ENCODE measurements at regions of chr11 and their contacts with region 1.

Region 1: GRCh38 chr11:9972989-9973388 is 309.1 kb downstream of the SWAP70 start:
- DNase-seq: peak; percentile 9
- H3K4me3 Mint-ChIP-seq: no peak overlapping the region
- H3K27ac Mint-ChIP-seq: no peak overlapping the region
- H3K4me1 Mint-ChIP-seq: no peaks in the 10 kb centered on the region
- H3K27me3 Mint-ChIP-seq: peaks cover 5% of the 10 kb centered on the region

Region 2: GRCh38 chr11:9534791-9535781 is 437.9 kb before region 1 on chr11:
- intact Hi-C with region 1: loop called (anchors 1 kb)
- DNase-seq: peak; percentile 59
- H3K4me3 Mint-ChIP-seq: no peak overlapping the region
- H3K27ac Mint-ChIP-seq: no peak overlapping the region
- H3K4me1 Mint-ChIP-seq: no peaks in the 10 kb centered on the region
- H3K27me3 Mint-ChIP-seq: no peaks in the 10 kb centered on the region

Region 3: GRCh38 chr11:9663699-9664275 is 309.2 kb before region 1 on chr11 and contains the start of gene SWAP70:
- intact Hi-C with region 1: loop called (anchors 10 kb)
- DNase-seq: peak; percentile 79
- H3K4me3 Mint-ChIP-seq: peak within 1 kb of the TSS; percentile 88
- H3K27ac Mint-ChIP-seq: peak within 1 kb of the TSS; percentile 31
- H3K4me1 Mint-ChIP-seq: peaks cover 18% of the 10 kb centered on the region
- H3K27me3 Mint-ChIP-seq: peaks cover 27% of the 10 kb centered on the region
- total RNA-seq, gene SWAP70: 6.3 and 8.5 TPM in 2 replicates

Region 4: DNA sequence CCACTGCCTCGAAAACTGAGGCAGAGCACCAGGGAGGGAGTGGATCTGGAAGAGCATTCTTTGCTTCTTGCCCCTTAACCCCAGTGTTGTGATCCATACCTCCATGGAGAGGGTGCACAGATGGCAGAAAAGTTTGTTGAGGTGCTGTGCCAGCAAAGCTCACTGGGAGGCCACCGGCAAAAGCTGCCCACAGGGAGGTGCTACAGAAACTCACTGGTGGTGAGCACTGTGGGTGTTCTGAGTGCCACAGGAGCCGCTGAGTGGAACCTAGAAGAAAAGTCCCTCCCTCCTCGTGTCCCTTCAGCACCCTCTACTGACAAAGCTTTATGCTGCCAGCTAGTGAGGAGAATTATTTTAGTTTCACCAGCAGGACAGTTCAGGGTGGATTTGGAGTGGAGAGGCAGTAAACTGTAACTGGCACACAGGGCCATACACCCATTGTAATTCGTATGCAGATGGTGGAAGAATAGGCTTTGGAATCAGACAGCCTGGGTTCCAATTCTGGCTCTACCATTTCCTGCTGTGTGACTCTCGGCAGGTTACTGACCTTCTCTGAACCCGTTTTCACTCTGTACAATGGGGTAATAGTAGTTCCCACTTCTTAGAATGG is 224.5 kb before region 1 on chr11:
- intact Hi-C with region 1: loop called (anchors 2 kb)
- DNase-seq: peak; percentile 66
- H3K4me3 Mint-ChIP-seq: no peak overlapping the region
- H3K27ac Mint-ChIP-seq: no peak overlapping the region
- H3K4me1 Mint-ChIP-seq: peaks cover 34% of the 10 kb centered on the region
- H3K27me3 Mint-ChIP-seq: peaks cover 2% of the 10 kb centered on the region

Region 5: GRCh38 chr11:9861860-9862725 is 110.9 kb before region 1 on chr11:
- intact Hi-C with region 1: loop called (anchors 1 kb)
- DNase-seq: peak; percentile 11
- H3K4me3 Mint-ChIP-seq: no peak overlapping the region
- H3K27ac Mint-ChIP-seq: peak overlapping the region; percentile 1
- H3K4me1 Mint-ChIP-seq: peaks cover 34% of the 10 kb centered on the region
- H3K27me3 Mint-ChIP-seq: peaks cover 4% of the 10 kb centered on the region

Region 6: DNA sequence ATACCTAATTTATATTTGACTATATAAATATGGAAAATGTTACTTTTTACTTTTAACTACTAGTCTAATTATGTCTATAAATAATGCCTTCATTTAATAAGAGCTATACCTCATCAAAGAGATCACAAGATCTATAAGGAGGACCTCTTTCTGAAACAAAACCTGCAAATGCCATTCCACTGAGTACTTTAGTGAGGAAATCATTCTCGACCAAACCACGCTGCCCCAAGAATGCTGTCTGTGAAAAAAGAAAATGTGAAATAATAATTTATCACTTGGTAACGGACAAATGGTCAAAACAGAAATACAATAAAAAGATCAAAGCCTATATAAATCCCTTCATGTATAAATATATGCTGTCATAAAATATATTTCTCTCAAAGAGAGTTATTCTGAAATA is 19.3 kb after region 1 on chr11:
- intact Hi-C with region 1: no loop called
- DNase-seq: no peak
- H3K4me3 Mint-ChIP-seq: no peak overlapping the region
- H3K27ac Mint-ChIP-seq: no peak overlapping the region
- H3K4me1 Mint-ChIP-seq: no peaks in the 10 kb centered on the region
- H3K27me3 Mint-ChIP-seq: no peaks in the 10 kb centered on the region

Region 7: GRCh38 chr11:10322830-10323792 is 350.1 kb after region 1 on chr11:
- intact Hi-C with region 1: loop called (anchors 1 kb)
- DNase-seq: no peak
- H3K4me3 Mint-ChIP-seq: no peak overlapping the region
- H3K27ac Mint-ChIP-seq: peak overlapping the region; percentile 88
- H3K4me1 Mint-ChIP-seq: peaks cover 20% of the 10 kb centered on the region
- H3K27me3 Mint-ChIP-seq: peaks cover 16% of the 10 kb centered on the region